GM10248 (cell line): ENCODE measurements at regions of chr4 and their contacts with region 1.

Region 1: DNA sequence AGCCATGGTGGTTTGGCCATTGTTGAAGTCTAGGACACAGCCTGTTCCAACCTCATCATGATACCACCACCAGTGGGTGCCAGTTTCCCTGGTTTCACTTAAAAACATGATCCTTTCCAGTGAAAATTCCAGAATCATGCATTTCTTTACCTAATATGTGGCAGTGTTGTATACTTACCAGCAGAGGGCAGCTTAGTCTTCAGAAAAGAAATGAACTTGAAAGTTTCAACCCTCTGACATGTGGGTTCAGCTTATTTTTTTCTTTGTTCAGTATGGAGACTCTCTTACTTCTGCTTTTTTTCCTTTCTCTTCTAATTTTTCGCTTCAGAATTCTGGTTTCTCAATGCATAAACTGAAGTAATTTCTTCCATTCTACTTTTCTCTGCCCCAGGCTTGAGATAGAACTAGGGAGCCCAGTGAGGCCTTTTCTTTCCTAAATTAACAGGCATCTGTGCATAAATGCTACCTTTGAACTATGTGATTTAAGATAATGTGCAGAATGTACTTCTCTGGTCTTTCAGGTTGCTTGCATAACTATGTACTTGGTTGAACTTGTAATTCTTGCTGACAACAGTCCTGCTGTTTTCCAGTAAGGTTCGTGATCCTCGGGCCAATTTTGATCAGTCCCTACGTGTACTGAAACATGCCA is 10.7 kb downstream of the LIAS start:
- DNase-seq: peak; percentile 62
- CTCF ChIP-seq: peak; percentile 71

Region 2: DNA sequence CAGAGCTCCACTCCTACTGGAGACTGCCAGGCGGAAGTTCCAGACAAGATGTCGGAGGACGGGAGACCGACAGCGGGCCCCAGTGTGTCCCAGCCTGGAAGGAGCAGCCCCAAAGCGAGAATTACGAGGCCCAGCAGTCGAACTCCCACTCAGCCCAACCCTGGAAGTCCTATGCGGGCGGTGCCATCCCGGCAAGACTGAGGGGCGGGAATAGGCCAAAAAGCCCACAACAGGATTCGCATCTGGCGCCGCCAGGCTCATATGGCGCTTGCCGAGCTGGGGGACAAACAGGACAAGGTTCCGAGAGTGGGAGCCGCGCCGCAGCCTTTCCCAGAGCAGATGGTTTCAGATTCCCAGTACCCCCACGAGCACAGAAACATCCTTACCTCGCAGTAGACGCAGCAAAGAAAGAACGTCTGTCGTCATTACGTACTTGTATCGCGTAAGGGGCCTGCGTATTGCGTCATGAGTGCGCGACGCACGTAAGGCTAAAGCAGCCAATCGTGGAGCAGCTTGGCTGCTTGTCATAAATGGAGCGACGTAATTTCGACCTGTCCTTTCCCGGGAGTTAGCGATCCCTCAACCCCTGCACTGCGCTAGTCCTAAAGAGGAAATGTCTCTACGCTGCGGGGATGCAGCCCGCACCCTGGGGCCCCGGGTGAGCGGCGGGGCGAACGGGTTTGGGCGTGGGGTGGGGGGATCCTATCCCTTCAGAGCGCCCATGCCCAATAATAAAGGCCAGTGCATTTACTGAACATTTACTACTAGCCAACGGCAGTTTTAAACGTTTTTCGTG is 10.8 kb before region 1 on chr4 and contains the starts of genes LIAS and RPL9:
- CTCF ChIA-PET with region 1: interaction called, 24 read pairs
- POLR2A ChIA-PET with region 1: interaction called, 5 read pairs
- DNase-seq: peak; percentile 96
- CTCF ChIP-seq: no peak

Region 3: GRCh38 chr4:39480902-39481695 is 11.5 kb after region 1 on chr4:
- CTCF ChIA-PET with region 1: interaction called, 12 read pairs
- POLR2A ChIA-PET with region 1: no interaction called
- DNase-seq: no peak
- CTCF ChIP-seq: no peak

Region 4: GRCh38 chr4:39638354-39639240 is 169.0 kb after region 1 on chr4 and contains the start of gene SMIM14:
- CTCF ChIA-PET with region 1: interaction called, 10 read pairs
- POLR2A ChIA-PET with region 1: interaction called, 3 read pairs
- DNase-seq: peak; percentile 90
- CTCF ChIP-seq: no peak

Region 5: DNA sequence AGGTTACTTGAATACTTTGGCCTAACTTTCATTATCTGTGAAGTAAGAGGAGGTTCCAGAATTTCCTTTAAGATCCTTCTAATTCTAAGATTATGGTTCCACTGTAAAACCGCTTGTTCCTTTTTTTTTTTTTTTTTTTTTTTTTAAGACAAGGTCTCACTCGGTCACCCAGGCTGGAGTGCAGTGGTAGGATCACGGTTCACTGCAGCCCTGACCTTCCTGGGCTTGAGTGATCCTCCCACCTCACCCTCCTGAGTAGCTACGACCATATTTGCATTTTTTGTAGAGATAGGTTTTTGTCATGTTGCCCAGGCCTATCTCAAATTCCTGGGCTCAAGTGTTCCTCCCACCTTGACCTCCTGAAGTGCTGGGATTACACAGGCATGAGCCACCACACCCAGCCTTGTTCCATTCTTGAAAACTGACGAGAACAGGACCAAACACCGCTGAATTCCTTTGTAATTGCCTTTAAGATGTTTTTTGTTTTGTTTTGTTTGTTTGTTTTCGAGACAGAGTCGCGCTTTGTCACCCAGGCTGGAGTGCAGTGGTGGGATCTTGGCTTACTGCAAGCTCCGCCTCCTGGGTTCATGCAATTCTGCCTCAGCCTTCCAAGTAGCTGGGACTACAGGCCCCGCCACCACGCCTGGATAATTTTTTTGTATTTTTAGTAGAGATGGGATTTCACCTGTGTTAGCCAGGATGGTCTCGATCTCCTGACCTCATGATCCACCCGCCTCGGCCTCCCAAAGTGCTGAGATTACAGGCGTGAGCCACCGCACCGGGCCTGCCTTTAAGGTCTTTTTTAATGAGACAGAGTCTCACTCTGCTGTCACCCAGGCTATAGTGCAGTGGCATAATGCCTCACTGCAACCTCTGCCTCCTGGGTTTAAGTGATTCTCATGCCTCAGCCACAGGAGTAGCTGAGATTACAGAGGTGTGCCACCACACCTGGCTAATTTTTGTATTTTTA is 501.4 kb after region 1 on chr4:
- CTCF ChIA-PET with region 1: interaction called, 20 read pairs
- POLR2A ChIA-PET with region 1: no interaction called
- DNase-seq: no peak
- CTCF ChIP-seq: no peak

Region 6: DNA sequence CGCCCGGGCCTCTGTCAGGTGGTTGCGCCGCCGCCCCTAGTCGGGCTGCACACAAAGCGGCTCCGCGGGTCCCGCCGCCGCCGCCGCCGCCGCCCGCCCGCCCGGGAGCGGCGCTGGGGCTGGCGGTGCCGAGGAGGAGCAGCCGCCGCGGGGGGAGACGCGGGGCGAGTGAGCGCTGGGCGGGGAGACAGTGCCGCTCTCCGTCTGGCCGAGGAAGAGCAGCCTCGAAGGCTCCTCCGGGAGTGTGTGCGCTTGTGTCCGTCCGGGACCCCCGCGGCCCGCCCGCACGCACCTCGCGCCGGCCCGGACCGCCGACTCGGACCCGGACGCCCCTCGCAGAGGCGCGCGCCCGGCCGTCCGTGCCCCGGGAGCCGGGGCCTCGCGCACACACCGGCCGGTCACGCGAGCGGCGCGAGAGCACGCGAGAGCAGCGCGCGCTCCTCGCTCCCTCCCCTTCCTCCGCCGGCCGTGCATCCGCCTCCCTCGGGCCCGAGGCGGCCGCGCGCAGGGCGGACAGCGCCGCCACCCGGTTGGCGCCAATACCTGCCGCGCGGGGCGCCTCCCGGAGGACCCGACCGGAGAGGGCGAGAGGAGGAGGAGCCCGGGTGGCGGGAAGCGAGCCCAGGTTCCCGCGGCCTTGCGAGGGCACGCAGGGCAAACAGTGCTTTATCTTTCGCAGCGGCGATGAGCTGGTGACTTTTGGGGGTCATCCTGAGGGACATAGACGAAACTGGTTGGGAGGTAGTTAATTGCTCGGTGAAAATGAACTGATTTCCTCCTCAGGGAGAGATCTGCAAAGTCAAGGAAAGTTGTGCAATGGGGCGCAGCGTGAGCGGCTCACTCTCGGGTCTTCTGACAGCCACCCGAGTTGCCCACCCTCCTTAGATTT is 508.2 kb after region 1 on chr4 and contains the start of gene PDS5A:
- CTCF ChIA-PET with region 1: interaction called, 20 read pairs
- POLR2A ChIA-PET with region 1: no interaction called
- DNase-seq: peak; percentile 97
- CTCF ChIP-seq: peak; percentile 99